Dendritic cell treated with granulocyte-macrophage colony-stimulating factor and Interleukin-4, amounts not matched to agents 40 ng/mL and 50 ng/mL, for 4 days (primary cell): ENCODE measurements at regions of chr1 and their contacts with region 1.

Region 1: DNA sequence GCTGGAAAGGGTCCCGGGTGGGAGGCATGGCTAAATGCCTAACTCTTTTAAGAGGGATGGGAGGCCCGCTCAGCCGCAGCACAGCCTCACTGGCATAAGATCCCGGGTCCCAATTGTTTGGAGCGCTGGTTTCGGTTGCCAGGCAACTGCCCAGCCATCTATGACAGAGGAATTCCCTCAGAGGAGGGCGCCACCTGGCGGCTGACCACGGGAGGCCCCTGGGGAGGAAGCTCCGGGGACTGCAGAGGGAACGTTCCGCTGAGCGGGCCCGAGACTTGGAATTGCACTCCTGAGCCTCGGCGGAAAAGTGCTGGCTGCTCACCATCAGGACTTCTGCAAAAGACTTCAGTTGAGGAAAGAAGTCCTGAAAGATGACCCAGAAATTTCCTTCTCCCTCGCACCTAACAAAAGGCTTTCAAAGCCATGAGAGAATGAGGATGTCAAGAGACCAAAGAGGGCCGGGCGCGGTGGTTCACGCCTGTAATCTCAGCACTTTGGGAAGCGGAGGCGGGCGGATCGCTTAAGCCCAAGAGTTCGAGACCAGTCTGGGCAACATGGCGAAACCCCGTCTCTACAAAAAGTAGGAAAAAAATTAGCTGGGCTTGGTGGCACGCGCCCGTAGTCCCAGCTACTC is 1.1 kb upstream of the ELAPOR1 start:
- H3K4me3 Mint-ChIP-seq: peak overlapping the region; percentile 71
- H3K27ac Mint-ChIP-seq: peak overlapping the region; percentile 65
- H3K4me1 Mint-ChIP-seq: peaks cover 39% of the 10 kb centered on the region
- H3K27me3 Mint-ChIP-seq: peaks cover 40% of the 10 kb centered on the region

Region 2: DNA sequence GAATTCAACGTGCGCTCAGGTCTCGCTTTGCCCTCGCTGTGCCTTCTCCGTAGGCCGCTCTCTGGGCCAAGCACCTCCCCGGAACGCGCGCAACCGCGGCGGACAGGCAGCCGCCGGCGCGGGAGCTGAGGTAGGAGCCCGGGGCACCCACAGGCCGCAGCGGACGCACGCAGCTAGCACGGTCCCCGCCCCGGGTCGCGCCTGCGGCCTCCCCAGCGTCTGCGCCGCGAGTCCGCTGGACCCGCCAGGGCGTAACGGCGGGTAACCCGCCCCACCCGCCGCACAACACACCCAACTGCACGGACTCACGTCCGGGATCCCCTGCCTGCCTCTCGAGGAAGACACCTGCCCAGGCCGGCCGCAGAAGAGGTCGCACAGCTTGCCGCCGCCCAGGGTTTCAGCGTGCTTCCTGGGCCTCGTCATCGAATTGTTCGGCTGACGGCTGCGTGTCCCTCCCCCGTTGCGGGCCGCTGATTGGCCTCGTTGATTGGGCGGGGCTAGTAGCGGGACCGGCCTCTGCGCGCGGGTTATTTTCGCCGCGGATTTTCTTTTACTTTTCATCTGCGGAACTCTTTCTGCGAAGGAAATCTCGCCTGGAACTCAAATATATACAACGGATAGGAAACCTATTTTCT is 149.6 kb before region 1 on chr1 and contains the start of gene CLCC1:
- intact Hi-C with region 1: loop called (anchors 10 kb)
- H3K4me3 Mint-ChIP-seq: peak within 1 kb of the TSS; percentile 94
- H3K27ac Mint-ChIP-seq: peak within 1 kb of the TSS; percentile 97
- H3K4me1 Mint-ChIP-seq: peaks cover 29% of the 10 kb centered on the region
- H3K27me3 Mint-ChIP-seq: no peaks in the 10 kb centered on the region

Region 3: DNA sequence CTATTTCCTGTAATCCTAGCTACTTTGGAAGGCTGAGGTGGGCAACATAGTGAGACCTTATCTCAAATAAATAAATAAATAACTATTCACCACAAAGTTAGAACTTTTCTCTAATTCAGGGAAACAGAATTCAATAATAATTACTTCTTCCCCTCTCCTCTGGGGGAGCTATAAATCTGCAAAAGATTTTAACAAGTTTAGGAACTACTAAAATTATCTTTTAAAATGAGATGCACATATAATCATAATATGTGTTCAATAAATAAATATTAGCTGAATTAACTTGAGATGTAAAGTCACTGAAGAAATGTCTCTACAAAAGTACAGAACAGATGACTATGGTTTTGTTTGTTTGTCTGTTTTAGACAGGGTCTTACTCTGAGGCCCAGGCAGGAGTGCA is 84.9 kb before region 1 on chr1:
- intact Hi-C with region 1: loop called (anchors 5 kb)
- H3K4me3 Mint-ChIP-seq: no peak overlapping the region
- H3K27ac Mint-ChIP-seq: no peak overlapping the region
- H3K4me1 Mint-ChIP-seq: no peaks in the 10 kb centered on the region
- H3K27me3 Mint-ChIP-seq: no peaks in the 10 kb centered on the region

Region 4: DNA sequence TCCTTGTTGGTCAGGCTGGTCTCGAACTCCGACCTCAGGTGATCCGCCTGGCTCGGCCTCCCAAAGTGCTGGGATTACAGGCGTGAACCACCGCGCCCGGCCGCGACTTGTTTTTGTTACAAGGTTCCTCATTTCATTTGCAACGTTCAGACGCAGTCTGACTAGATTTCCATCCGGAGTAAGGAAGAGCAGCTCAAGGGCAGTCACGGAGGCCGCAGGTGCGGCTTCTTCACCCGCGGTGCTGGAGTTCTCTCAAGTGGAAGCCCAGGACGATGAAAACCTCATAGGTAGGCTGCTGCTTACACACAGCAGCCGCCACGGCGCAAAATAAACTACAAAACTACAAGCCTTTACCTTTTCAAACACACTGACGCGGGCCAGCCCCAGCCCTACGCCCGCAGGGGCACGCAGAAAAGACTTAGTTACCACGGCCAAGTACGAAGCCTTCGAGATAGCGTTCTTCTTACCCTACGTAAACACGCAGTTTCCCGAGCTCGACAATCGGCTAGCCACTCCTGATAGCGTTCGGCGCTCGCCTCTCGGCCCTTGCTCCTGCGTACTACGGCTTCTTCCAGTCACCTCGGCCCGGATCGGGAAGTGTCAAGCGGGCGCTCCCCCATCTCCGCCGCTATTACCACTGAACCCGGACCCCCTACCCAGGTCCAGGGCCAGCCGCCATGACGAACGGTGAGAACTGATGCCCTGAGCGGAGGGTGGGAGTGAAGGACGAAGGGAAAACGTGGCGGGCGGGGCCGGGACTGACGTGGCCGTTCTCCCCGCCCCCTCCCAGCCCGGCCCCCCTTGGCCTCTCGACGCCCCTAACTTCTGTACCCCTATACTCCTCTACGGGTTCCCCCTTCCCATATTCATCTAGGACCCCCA is 22.3 kb before region 1 on chr1 and contains the start of gene TMEM167B:
- intact Hi-C with region 1: loop called (anchors 1 kb)
- H3K4me3 Mint-ChIP-seq: peak within 1 kb of the TSS; percentile 97
- H3K27ac Mint-ChIP-seq: peak within 1 kb of the TSS; percentile 97
- H3K4me1 Mint-ChIP-seq: peaks cover 25% of the 10 kb centered on the region
- H3K27me3 Mint-ChIP-seq: no peaks in the 10 kb centered on the region

Region 5: DNA sequence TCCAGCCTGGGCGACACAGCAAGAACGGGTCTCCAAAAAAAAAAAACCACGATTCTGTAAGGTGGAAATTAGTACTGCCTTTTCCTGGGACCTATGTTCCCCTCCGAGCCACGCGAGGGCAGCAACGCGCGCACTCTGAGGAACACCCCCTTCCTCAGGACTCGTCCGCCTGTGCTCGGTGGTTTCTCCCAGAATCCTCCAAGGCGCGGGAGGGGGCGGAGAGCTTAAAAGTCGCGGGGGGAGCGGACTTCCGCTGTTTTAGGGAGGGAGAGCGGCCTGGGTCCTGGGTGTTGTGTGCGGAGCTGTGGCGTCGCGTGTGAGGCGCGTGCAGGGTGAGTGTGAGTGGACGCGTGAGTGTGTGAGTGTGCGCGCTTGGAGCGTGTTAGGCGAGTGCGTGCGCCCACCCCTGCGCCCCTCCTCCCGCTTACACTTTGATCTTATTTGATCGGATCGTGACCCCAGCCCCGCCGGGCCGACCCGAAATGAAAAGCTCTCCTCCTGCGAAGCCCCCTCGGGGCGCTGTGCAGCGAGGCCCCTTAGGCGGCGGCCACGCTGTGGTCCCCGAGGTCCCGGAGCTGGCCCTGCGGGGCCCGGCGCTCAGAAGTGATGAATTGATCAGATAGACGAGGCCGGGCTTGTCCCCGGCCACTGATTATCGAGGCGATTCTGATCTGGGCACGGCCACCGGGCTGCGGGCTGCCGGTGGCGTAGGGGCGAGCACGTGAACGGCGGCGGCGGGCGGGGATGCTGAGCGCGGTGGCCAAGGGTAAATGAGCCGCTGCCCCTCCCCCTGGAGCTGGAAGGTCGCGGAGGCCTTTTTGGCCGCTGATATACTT is 12.6 kb before region 1 on chr1:
- intact Hi-C with region 1: loop called (anchors 1 kb)
- H3K4me3 Mint-ChIP-seq: peak overlapping the region; percentile 93
- H3K27ac Mint-ChIP-seq: peak overlapping the region; percentile 90
- H3K4me1 Mint-ChIP-seq: no peaks in the 10 kb centered on the region
- H3K27me3 Mint-ChIP-seq: no peaks in the 10 kb centered on the region

Region 6: GRCh38 chr1:109193653-109194590 is 81.2 kb after region 1 on chr1:
- intact Hi-C with region 1: loop called (anchors 5 kb)
- H3K4me3 Mint-ChIP-seq: no peak overlapping the region
- H3K27ac Mint-ChIP-seq: no peak overlapping the region
- H3K4me1 Mint-ChIP-seq: peaks cover 10% of the 10 kb centered on the region
- H3K27me3 Mint-ChIP-seq: peaks cover 8% of the 10 kb centered on the region